K562 (cell line): ENCODE measurements at regions of chr1 and their contacts with region 1.

Region 1: GRCh38 chr1:248873409-248873992 is 14.6 kb upstream of the ZNF692 start:
- DNase-seq: peak; percentile 84 to 97 (median 84)
- ATAC-seq: peak; percentile 82
- H3K4me3 ChIP-seq: peak overlapping the region; percentile 79
- H3K27ac ChIP-seq: peak overlapping the region; percentile 98
- H3K4me1 ChIP-seq: peaks cover 16 to 21% of the 10 kb centered on the region in 2 experiments
- H3K27me3 ChIP-seq: no peaks in the 10 kb centered on the region
- CTCF ChIP-seq: peak in 1 of 3 experiments; percentile 4; a peak in 2 of 6 replicates
- EP300 ChIP-seq: peak; percentile 73
- POLR2A ChIP-seq: peak; percentile 82
- RAD21 ChIP-seq: no peak

Region 2: DNA sequence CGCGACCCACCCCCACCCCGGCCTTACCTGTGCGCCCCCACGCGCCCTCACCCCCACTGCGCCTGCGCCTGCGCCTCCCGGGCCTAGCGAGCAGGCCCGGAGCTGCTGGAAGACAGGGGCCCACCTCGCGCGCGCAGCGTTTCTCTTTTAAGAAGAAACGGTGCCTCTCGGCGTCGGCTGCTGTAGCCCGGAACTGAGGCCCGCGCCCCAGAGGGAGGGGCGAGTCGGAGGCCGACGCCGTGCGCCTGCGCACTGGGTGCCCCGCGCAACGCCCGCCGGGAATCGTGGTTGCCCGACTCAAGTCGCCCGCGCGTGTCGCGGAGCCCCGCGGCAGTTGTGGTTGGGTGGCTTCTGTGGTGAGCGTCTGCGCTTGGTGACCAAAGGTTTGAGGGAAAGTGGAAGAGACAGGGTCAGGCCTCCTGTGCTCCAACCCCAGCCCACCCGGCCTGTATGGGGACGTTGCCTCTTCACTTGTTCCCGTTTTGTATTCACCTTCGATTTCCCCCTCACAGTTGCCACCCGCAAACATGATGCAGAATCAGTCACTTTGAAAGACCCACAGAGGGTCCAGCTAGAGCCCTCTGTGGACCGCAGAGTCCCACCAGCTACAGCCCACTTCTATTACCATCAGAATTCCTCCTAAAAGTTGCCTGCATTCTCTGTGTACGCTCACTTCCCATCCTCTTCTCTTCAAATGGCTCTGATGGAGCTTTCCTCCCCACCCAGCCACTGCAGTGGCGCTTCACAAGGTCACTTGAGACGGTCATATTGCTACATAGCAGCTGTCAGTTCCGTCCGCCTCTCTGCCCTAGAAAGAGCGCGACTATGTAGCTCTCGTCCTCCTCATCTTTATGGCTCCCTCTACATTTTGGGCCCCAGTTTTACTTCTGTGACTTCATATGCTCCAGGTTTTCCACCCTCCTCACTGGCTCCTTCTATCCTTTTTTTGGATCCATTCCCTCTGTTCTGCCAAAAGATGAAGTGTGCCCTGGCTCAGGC is 14.3 kb before region 1 on chr1 and contains the start of gene ZNF692:
- CTCF ChIA-PET with region 1: no interaction called
- POLR2A ChIA-PET with region 1: interaction called, 71 read pairs
- in situ Hi-C with region 1: no loop called
- intact Hi-C with region 1: loop called (anchors 1 kb)
- DNase-seq: peak; percentile 94 to 99 (median 96)
- ATAC-seq: peak; percentile 86
- H3K4me3 ChIP-seq: peak within 1 kb of the TSS; percentile 66
- H3K27ac ChIP-seq: peak within 1 kb of the TSS; percentile 99
- H3K4me1 ChIP-seq: peaks cover 47 to 50% of the 10 kb centered on the region in 2 experiments
- H3K27me3 ChIP-seq: no peaks in the 10 kb centered on the region
- CTCF ChIP-seq: no peak
- EP300 ChIP-seq: peak; percentile 4; the same call in 1 of the 2 replicates
- POLR2A ChIP-seq: peak; percentile 97
- RAD21 ChIP-seq: no peak
- polyA plus RNA-seq, gene ZNF692: 8.4 to 10.5 TPM

Region 3: DNA sequence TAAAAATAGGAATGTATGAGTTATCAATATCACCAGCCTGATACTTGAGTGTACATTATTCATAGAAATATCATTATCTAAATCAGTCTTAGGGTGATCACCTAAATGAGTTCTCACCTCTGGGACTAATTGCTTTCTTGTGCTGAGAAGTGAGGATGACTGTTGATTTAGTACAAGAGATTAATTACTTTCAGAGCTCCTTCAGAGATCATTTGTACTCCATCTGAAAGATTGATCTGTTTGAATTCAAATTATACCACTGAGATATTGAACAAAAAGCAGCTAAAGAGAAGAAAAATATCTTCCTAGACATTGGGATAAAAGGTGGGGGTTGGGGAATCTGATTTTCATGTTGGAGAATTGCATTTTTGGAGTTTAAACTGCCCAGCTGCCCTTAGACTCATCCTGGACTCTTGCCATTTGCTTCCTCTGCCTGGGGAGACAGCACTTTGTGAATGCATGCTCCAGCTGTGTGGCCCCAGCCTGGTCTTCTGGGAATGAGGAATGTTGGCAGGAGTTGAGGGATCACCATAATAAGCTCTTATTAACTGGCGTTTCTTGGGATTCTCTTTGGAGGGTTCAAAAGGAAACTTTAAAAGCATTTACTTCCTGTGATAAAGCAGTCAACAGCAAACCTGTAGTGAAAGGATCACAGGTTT is 12.9 kb after region 1 on chr1:
- CTCF ChIA-PET with region 1: interaction called, 3 read pairs
- POLR2A ChIA-PET with region 1: interaction called, 19 read pairs
- in situ Hi-C with region 1: no loop called
- intact Hi-C with region 1: loop called (anchors 1 kb)
- DNase-seq: peak in 1 of 4 experiments; percentile 51
- ATAC-seq: no peak
- H3K4me3 ChIP-seq: no peak overlapping the region
- H3K27ac ChIP-seq: peak overlapping the region; percentile 51
- H3K4me1 ChIP-seq: peaks cover 23 to 56% of the 10 kb centered on the region in 2 experiments
- H3K27me3 ChIP-seq: no peaks in the 10 kb centered on the region
- CTCF ChIP-seq: no peak
- EP300 ChIP-seq: no peak
- POLR2A ChIP-seq: no peak
- RAD21 ChIP-seq: no peak